GM13977 (cell line): ENCODE measurements at regions of chr14 and their contacts with region 1.

Region 1: DNA sequence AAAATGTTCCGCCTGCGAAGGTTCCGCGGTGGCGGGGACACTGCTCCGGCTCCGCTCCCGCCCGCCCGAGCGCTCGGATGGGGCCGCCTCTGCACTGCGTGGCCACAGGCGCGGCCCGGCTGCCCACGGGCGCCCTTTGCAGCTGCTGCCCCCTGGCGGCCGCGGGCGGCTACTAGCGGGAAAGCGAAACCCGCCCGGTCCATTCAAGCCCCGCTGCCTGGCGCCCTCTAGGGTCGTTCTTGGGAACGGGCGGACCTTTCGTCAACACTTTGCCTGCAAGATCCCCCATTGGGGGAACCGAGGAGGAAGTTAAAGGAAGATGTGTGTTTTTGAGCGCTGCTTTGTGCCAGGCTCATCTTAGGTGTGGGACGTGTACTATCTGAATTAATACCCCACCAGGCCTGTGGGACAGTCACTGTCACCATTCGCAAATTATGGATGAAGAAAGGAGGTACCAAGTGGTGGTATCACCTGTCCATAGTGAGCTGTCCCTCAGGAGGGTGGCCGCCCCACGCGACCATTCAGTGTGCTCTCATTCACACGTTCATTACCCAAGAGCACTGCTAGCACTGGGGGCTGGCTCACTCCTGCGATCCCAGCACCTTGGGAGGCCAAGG is 19.4 kb downstream of the GPR132 start:
- DNase-seq: peak; percentile 96
- CTCF ChIP-seq: peak; percentile 100

Region 2: GRCh38 chr14:104752735-104753531 is 292.9 kb before region 1 on chr14 and contains the start of gene SIVA1:
- in situ Hi-C with region 1: loop called (anchors 25 kb)
- DNase-seq: peak; percentile 100
- CTCF ChIP-seq: no peak

Region 3: GRCh38 chr14:104979761-104980610 is 65.8 kb before region 1 on chr14:
- in situ Hi-C with region 1: loop called (anchors 5 kb)
- DNase-seq: no peak
- CTCF ChIP-seq: no peak

Region 4: DNA sequence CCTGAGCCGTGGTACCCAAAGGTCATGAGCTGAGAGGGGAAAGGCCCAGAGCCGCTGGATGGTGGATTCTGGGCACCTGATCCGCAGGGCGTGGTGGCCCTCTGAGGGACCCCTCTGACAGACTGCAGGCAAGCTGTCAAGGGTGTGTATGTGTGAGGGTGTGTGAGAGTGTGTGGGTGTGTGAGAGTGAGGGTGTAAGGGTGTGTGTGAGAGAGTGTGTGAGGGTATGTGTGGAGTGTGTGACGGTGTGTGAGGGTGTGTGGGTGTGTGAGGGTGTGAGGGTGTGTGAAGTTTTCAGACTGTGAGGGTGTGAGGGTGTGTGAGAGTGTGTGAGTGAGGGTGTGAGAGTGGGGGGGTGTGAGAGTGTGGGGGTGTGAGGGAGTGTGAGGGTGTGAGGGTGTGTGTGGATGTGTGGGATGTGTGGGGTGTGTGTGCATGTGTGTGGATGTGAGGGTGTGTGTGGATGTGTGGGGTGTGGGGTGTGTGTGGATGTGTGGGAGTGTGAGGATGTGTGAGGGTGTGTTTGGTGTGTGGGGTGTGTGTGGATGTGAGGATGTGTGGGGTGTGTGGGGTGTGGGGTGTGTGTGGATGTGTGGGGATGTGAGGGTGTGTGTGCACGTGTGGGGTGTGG is 637.2 kb after region 1 on chr14:
- in situ Hi-C with region 1: no loop called
- DNase-seq: no peak
- CTCF ChIP-seq: no peak